ENCODE measurements at regions of chr17 and their contacts with region 1.

Region 1: DNA sequence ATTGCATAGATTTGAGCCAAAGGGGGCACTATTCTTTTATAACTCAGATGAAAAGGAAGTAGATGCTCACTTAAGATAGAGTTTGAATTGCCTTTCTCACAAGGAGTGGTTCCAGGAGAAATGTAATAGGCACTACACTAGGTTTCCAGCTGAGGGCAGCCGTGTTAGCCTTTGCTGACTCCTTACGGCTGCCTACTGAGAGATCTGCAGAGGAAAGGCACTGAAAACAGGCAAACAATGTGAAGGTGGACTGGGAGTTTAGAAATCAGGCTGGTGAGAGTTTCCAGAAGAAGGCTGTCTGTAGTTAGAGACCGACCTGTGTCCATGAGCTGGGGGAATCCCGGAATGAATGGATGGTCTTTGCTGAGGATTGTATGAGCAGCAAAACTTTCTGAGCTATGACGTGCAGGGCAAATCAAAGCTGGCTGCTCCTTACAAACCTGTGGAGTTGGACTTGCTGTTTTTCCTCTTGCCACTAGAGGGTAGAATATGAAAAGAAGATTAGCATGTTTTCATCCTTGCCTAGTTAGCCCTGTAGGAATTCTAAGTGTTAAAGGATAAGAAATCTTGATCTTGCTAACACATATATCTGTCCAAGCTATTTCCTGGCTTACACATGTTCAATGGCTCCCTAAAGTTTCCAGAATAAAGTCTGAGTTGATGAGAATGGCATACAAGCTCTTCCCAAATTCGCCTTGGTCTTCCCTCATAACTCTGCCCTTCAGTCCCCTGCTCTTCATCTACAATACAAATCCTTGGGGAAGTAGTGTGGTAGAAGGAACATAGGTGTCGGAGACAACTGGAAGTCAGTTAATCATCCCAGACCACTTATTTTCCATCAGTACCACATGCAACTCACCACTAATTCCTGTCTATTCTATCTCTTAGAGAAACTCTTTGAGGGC is 20.1 kb upstream of the TAOK1 start:
- DNase-seq: peak; percentile 67 to 75 (median 72)
- H3K4me3 ChIP-seq: peak overlapping the region in 1 of 2 donors; percentile 36
- H3K4me3 Mint-ChIP-seq: no peak overlapping the region
- H3K27ac ChIP-seq: peak overlapping the region; percentile 35
- H3K27ac Mint-ChIP-seq: no peak overlapping the region
- H3K4me1 ChIP-seq: peaks cover 8% of the 10 kb centered on the region
- H3K4me1 Mint-ChIP-seq: no peaks in the 10 kb centered on the region
- H3K27me3 ChIP-seq: no peaks in the 10 kb centered on the region
- H3K27me3 Mint-ChIP-seq: no peaks in the 10 kb centered on the region

Region 2: DNA sequence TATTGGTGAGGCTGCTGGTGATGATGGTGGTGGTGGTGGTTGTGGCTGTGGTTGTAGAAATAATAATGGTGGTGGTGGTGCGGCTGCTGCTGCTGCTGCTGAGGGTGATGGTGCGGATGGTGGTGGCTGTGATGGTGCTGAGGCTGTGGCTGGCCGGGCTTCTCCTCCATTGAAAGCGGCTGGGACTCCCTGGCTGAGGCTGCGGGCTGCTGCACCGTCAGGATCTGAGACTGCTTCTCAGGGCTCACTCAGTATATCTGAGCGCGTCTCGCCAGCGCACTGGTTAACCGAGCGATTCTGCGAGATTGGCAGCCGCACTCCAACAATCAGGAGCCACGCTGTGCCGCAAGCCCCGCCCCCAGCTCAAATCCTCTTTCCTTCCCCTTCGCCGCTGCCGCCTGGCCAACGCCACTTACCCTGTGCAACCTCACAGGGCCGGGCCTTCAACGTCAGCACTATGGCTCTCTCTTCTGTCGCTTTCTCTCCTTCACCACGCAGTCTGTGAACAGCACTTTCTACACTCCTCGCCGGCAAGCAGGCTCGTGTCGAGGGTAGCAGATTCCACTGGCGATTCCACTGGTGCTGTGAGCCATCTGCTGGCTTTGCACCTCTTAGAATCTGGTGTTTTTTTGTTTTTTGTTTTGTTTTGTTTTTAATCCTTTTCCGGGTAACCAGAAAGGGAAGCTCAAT is 76.0 kb before region 1 on chr17 and contains the start of gene NUFIP2:
- CTCF ChIA-PET with region 1: interaction called, 6 read pairs
- POLR2A ChIA-PET with region 1: interaction called, 7 read pairs
- intact Hi-C with region 1: loop called (anchors 2 kb)
- DNase-seq: peak; percentile 95 to 99 (median 98)
- H3K4me3 ChIP-seq: peak within 1 kb of the TSS; percentile 77 to 79
- H3K4me3 Mint-ChIP-seq: peak within 1 kb of the TSS; percentile 99 to 100 (median 100)
- H3K27ac ChIP-seq: peak within 1 kb of the TSS; percentile 77
- H3K27ac Mint-ChIP-seq: peak within 1 kb of the TSS; percentile 98 to 100 (median 99)
- H3K4me1 ChIP-seq: peaks cover 41% of the 10 kb centered on the region
- H3K4me1 Mint-ChIP-seq: peaks cover 20 to 51% (median 34%) of the 10 kb centered on the region in 4 donors
- H3K27me3 ChIP-seq: no peaks in the 10 kb centered on the region
- H3K27me3 Mint-ChIP-seq: no peaks in the 10 kb centered on the region
- total RNA-seq, gene NUFIP2: 77.5 to 85.1 TPM

Region 3: GRCh38 chr17:29389982-29390850 is 20.1 kb after region 1 on chr17 and contains the start of gene TAOK1:
- CTCF ChIA-PET with region 1: interaction called, 55 read pairs
- POLR2A ChIA-PET with region 1: interaction called, 10 read pairs
- intact Hi-C with region 1: loop called (anchors 1 kb)
- DNase-seq: peak; percentile 96 to 98 (median 97)
- H3K4me3 ChIP-seq: peak within 1 kb of the TSS; percentile 89 to 98
- H3K4me3 Mint-ChIP-seq: peak within 1 kb of the TSS; percentile 94 to 99 (median 96)
- H3K27ac ChIP-seq: peak within 1 kb of the TSS; percentile 93
- H3K27ac Mint-ChIP-seq: peak within 1 kb of the TSS; percentile 94 to 98 (median 97)
- H3K4me1 ChIP-seq: peaks cover 45% of the 10 kb centered on the region
- H3K4me1 Mint-ChIP-seq: peaks cover 31 to 50% (median 40%) of the 10 kb centered on the region in 4 donors
- H3K27me3 ChIP-seq: no peaks in the 10 kb centered on the region
- H3K27me3 Mint-ChIP-seq: no peaks in the 10 kb centered on the region
- total RNA-seq, gene TAOK1: 71.2 to 72.0 TPM

Region 4: DNA sequence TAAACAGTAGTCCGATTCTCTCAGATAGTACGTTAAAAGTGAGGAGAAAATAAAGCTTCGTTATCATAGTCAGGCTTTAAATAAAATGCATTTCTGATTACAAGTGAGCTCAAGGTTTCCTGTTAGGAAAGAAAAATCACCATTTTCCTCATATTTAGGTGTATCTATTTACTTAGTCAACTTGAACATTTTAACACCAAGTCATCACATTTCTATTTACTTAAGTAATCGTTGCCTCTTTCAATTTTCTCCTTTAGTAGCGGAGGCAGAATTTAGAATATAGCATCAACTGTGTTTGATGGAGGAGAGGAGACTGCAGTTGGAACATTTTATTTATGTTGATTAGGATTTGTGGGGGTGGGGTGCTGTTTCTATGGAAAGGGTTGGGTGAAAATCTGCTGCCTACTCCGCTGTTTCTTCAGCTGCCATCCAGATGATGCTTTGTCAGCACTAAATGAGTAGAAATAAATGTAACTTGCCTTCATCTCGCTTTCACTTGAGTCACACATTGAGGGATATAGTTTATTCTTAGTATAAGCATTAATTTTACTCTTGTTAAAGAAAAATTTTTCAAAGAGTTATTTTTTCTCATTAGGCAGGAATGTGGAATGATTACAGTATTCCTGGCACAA is 154.5 kb after region 1 on chr17:
- CTCF ChIA-PET with region 1: interaction called, 17 read pairs
- POLR2A ChIA-PET with region 1: no interaction called
- intact Hi-C with region 1: no loop called
- DNase-seq: no peak
- H3K4me3 ChIP-seq: no peak overlapping the region
- H3K4me3 Mint-ChIP-seq: no peak overlapping the region
- H3K27ac ChIP-seq: no peak overlapping the region
- H3K27ac Mint-ChIP-seq: peak overlapping the region in 3 of 7 donors; percentile 22 to 50 (median 29)
- H3K4me1 ChIP-seq: no peaks in the 10 kb centered on the region
- H3K4me1 Mint-ChIP-seq: no peaks in the 10 kb centered on the region
- H3K27me3 ChIP-seq: no peaks in the 10 kb centered on the region
- H3K27me3 Mint-ChIP-seq: no peaks in the 10 kb centered on the region

Region 5: GRCh38 chr17:29574732-29575504 is 204.8 kb after region 1 on chr17:
- CTCF ChIA-PET with region 1: interaction called, 23 read pairs
- POLR2A ChIA-PET with region 1: interaction called, 13 read pairs
- intact Hi-C with region 1: loop called (anchors 10 kb)
- DNase-seq: no peak
- H3K4me3 ChIP-seq: no peak overlapping the region
- H3K4me3 Mint-ChIP-seq: no peak overlapping the region
- H3K27ac ChIP-seq: no peak overlapping the region
- H3K27ac Mint-ChIP-seq: peak overlapping the region in 3 of 7 donors; percentile 22 to 78 (median 41)
- H3K4me1 ChIP-seq: no peaks in the 10 kb centered on the region
- H3K4me1 Mint-ChIP-seq: peaks cover 3 to 16% (median 9%) of the 10 kb centered on the region in 4 donors
- H3K27me3 ChIP-seq: no peaks in the 10 kb centered on the region
- H3K27me3 Mint-ChIP-seq: no peaks in the 10 kb centered on the region

Region 6: GRCh38 chr17:29617125-29617480 is 247.0 kb after region 1 on chr17:
- CTCF ChIA-PET with region 1: interaction called, 10 read pairs
- POLR2A ChIA-PET with region 1: interaction called, 7 read pairs
- intact Hi-C with region 1: no loop called
- DNase-seq: peak; percentile 89 to 94 (median 91)
- H3K4me3 ChIP-seq: peak overlapping the region; percentile 64 to 89
- H3K4me3 Mint-ChIP-seq: peak overlapping the region; percentile 82 to 94 (median 92)
- H3K27ac ChIP-seq: peak overlapping the region; percentile 43
- H3K27ac Mint-ChIP-seq: peak overlapping the region; percentile 63 to 89 (median 81)
- H3K4me1 ChIP-seq: peaks cover 62% of the 10 kb centered on the region
- H3K4me1 Mint-ChIP-seq: peaks cover 20 to 51% (median 33%) of the 10 kb centered on the region in 4 donors
- H3K27me3 ChIP-seq: no peaks in the 10 kb centered on the region
- H3K27me3 Mint-ChIP-seq: no peaks in the 10 kb centered on the region

Measured in CD4-positive, alpha-beta memory T cell (primary cell).